Activated CD4-positive, alpha-beta T cell treated with anti-CD3 and anti-CD28 coated beads for 36 hours (primary cell): ENCODE measurements at regions of chr19 and their contacts with region 1.

Region 1: DNA sequence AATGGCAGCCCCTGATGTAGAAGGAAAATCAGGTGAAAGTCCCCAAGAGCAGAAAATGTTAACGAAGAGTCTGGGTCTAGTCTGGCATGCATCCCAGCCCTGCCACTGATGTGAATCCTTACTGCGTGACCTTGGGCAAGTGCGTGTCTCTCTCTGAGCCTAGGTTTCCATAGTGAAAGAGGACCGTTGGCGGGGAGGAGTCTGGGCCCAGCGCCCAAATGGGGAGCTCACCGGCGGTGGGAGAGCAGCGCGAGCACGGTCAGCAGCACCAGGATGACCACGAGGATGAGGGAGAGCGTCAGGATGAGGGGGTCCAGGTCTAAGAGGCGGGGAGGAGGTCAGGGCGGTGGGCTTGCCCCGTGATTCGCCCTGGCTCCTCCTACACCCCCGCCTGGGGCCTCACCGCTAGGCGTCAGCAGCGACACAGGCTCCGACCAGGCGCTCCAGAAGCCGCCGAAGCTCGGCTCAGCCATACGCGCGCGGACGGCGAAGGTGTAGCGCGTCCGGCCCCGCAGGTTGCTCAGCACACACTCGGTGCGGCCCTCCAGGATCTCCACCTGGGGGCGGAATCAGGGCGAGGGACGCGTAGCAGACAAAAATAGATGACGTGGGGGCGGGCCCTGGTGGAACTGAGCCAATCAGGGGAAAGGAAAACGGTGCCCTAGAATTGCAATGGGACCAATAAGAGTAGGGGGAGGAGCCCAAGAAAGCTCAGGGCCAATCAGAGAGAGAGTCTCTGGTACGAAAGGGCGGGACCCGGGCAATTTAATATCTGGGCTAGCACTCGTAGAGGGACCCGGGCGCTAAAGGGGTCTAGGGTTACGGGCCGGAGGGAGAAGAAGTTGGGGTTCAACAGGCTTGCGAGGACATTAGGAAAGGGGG is 3.2 kb downstream of the EPOR start:
- DNase-seq: peak; percentile 97
- ATAC-seq: peak; percentile 86
- H3K4me3 Mint-ChIP-seq: peak overlapping the region; percentile 75
- H3K27ac Mint-ChIP-seq: peak overlapping the region; percentile 93
- H3K4me1 Mint-ChIP-seq: peaks cover 46% of the 10 kb centered on the region
- H3K27me3 Mint-ChIP-seq: peaks cover 14% of the 10 kb centered on the region

Region 2: DNA sequence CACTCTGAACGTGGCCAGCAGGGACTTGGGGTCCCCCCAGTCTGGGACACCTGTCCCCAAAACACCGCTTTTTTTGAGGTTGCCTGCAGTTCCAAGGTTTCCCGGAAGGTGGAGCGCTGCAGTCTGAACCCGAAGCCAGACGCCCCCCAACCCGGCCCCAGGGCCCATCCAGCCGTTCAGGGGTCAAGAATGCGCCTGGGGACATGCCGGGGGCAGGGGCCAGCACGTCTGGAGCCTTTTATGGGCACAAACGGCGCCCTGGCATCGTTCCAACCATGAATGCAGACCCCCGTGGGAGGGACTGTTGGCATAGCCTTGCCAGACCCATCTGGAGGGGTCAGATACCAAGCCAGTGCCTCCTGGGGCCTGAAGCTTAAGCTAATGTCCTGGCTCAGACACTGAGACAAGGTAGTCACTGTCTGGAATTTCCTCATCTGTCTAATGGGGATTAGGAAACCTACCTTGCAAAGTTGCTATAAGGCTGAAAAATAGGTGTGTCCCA is 870.5 kb before region 1 on chr19:
- CTCF ChIA-PET with region 1: no interaction called
- POLR2A ChIA-PET with region 1: no interaction called
- intact Hi-C with region 1: no loop called
- DNase-seq: peak; percentile 74
- ATAC-seq: no peak
- H3K4me3 Mint-ChIP-seq: no peak overlapping the region
- H3K27ac Mint-ChIP-seq: no peak overlapping the region
- H3K4me1 Mint-ChIP-seq: peaks cover 16% of the 10 kb centered on the region
- H3K27me3 Mint-ChIP-seq: peaks cover 20% of the 10 kb centered on the region

Region 3: DNA sequence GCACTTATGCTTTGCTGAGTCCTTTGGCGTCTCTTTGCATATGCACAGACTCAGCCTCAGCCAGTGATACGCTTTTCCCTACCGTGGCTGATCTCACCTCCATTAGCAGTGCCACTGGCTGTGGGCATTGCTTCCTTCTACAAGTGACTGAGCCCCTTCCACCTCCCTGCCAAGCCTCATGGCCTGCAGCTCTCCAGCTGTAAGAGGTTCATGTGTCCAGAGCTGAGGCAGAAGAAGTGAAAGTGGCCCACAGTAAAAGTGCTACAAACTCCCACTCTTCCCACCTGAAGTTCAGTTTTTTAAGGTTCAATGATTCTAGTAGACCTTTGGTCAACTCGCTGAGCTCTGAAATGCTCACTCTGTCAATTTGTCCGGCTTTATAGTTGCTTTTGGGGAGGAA is 375.4 kb before region 1 on chr19:
- CTCF ChIA-PET with region 1: no interaction called
- POLR2A ChIA-PET with region 1: no interaction called
- intact Hi-C with region 1: no loop called
- DNase-seq: no peak
- ATAC-seq: no peak
- H3K4me3 Mint-ChIP-seq: no peak overlapping the region
- H3K27ac Mint-ChIP-seq: no peak overlapping the region
- H3K4me1 Mint-ChIP-seq: no peaks in the 10 kb centered on the region
- H3K27me3 Mint-ChIP-seq: no peaks in the 10 kb centered on the region

Region 4: DNA sequence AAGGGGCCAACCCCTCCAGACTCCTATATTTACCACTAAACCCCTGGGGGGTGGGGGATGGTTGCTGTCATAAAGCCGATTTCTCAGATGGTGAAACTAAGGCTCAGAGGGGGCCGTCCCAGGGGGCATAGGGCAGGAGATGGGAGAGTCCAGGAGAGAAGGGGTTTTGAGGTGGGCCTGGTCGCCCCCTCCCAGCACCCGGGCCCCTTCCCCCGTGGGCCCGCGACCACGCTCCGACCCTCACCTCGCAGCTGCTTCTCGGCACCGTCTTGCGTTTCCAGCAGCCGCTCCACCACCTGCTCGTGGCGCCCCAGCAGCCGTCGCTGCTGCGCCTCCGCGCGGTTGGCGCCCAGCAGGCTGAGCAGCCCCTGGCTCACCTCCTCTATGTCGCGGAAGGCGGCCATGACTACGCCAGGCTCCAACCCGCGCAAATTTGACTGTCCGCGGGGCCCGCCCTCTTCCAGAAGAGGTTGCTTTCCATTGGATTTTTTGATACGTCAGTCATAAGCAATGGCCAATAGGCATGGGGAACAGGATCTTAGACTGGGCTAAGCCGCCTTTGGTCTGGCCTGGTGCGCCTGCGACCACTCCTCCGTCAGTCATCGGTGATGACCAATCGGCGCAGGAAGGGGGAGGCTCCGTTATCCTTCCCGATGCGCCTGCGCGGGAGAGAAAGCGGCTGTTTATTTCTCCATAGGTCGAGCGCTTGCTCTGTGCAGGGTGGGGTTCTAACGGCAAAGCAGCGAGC is 225.3 kb before region 1 on chr19 and contains the start of gene SPC24:
- CTCF ChIA-PET with region 1: interaction called, 3 read pairs
- POLR2A ChIA-PET with region 1: no interaction called
- intact Hi-C with region 1: loop called in 1 of 2 experiments (anchors 2 kb)
- DNase-seq: peak; percentile 97
- ATAC-seq: peak; percentile 99
- H3K4me3 Mint-ChIP-seq: peak within 1 kb of the TSS; percentile 79
- H3K27ac Mint-ChIP-seq: peak within 1 kb of the TSS; percentile 80
- H3K4me1 Mint-ChIP-seq: peaks cover 12% of the 10 kb centered on the region
- H3K27me3 Mint-ChIP-seq: no peaks in the 10 kb centered on the region
- total RNA-seq, gene SPC24: 59.6 to 72.2 TPM

Region 5: DNA sequence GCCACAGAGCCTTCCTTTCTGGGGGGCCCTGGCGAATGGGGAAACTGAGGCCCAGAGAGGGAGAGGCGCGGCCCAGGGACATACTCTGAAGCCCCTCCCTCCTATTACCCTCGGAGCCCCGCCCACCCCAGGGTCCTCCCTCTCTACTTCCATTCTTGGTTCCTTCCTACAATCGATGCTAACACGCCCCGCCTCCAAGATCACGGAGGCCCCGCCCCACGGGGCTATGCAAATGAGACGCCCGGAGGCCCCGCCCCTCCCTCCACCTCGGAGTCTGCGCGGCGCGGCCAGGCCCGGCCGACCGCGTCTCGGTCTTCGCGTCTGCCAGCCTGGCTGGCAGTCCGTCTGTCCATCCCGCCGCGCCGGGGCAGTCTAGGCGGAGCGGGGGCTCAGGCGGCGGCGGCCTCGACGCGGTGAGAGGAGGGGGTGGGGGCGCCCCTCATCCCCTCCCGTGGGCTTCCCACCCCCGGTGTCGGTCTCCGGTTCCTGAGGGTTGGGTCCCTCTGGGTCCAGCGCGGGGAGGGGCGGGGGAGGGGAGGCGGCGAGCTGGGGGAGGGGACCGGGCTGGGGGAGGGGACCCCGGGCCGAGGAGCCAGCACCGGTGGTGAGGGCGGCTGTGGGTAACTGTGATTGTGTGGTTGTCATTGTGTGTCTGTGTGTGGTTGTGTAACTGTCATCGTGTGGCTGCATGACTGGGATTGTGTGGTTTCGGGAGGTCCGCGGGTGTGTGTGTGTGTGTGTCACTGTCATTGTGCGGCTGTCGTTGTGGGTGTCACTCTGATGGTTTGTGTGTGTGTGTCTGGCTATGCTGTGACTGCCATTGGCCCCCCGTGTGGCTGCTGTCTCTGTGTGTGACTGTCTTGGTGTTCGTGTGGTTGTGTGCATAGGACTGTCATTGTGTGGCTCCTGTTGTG is 25.5 kb before region 1 on chr19 and contains the start of gene PLPPR2:
- CTCF ChIA-PET with region 1: interaction called, 3 read pairs
- POLR2A ChIA-PET with region 1: no interaction called
- intact Hi-C with region 1: loop called in 1 of 2 experiments (anchors 1 kb)
- DNase-seq: peak; percentile 92
- ATAC-seq: peak; percentile 95
- H3K4me3 Mint-ChIP-seq: peak within 1 kb of the TSS; percentile 43
- H3K27ac Mint-ChIP-seq: peak within 1 kb of the TSS; percentile 23
- H3K4me1 Mint-ChIP-seq: peaks cover 7% of the 10 kb centered on the region
- H3K27me3 Mint-ChIP-seq: peaks cover 13% of the 10 kb centered on the region
- total RNA-seq, gene PLPPR2: 2.1 to 2.2 TPM

Region 6: DNA sequence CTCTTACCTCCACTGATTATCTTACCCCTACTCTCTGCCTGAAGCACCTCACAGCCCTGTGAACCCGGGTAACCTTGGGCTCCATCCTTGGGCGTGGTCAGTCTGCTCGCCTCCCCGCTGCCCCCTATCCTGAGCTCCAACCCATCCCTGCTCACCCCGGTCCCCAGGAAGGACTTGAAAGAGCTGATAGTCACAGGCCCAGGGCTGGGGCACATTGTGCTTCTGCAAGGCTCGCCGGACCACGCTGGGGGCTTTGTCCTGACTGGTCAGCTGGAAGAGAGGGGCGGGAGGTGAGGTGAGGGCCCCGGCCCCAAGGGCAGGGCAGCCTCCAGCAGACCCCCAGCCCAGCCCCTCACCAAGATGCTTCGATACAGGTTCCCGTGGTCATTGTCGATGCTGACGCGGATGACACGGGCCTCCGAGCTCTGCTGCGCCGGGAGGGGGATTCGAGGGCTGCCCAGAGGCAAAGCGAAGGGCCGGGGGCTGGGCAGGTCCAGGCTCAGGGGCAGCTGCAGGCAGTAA is 16.3 kb after region 1 on chr19:
- CTCF ChIA-PET with region 1: interaction called, 15 read pairs
- POLR2A ChIA-PET with region 1: no interaction called
- intact Hi-C with region 1: no loop called
- DNase-seq: no peak
- ATAC-seq: no peak
- H3K4me3 Mint-ChIP-seq: no peak overlapping the region
- H3K27ac Mint-ChIP-seq: no peak overlapping the region
- H3K4me1 Mint-ChIP-seq: no peaks in the 10 kb centered on the region
- H3K27me3 Mint-ChIP-seq: peaks cover 7% of the 10 kb centered on the region

Region 7: GRCh38 chr19:11422163-11423021 is 41.5 kb after region 1 on chr19:
- CTCF ChIA-PET with region 1: interaction called, 24 read pairs
- POLR2A ChIA-PET with region 1: interaction called, 3 read pairs
- intact Hi-C with region 1: loop called (anchors 1 to 5 kb)
- DNase-seq: peak; percentile 82
- ATAC-seq: peak; percentile 78
- H3K4me3 Mint-ChIP-seq: peak overlapping the region; percentile 52
- H3K27ac Mint-ChIP-seq: no peak overlapping the region
- H3K4me1 Mint-ChIP-seq: peaks cover 31% of the 10 kb centered on the region
- H3K27me3 Mint-ChIP-seq: peaks cover 54% of the 10 kb centered on the region

Region 8: GRCh38 chr19:11528551-11529341 is 147.9 kb after region 1 on chr19 and contains the start of gene ECSIT:
- CTCF ChIA-PET with region 1: no interaction called
- POLR2A ChIA-PET with region 1: no interaction called
- intact Hi-C with region 1: loop called in 1 of 2 experiments (anchors 1 kb)
- DNase-seq: peak; percentile 97
- ATAC-seq: peak; percentile 97
- H3K4me3 Mint-ChIP-seq: peak within 1 kb of the TSS; percentile 99
- H3K27ac Mint-ChIP-seq: peak within 1 kb of the TSS; percentile 96
- H3K4me1 Mint-ChIP-seq: peaks cover 28% of the 10 kb centered on the region
- H3K27me3 Mint-ChIP-seq: no peaks in the 10 kb centered on the region
- total RNA-seq, gene ECSIT: 37.2 to 44.6 TPM